ENCODE measurements at regions of chr5 and their contacts with region 1.

Region 1: GRCh38 chr5:138789771-138790242 is 36.6 kb downstream of the CTNNA1 start:
- DNase-seq: peak; percentile 13
- ATAC-seq: peak; percentile 56
- H3K4me3 Mint-ChIP-seq: no peak overlapping the region
- H3K27ac Mint-ChIP-seq: no peak overlapping the region
- H3K4me1 Mint-ChIP-seq: peaks cover 30% of the 10 kb centered on the region
- H3K27me3 Mint-ChIP-seq: peaks cover 55% of the 10 kb centered on the region
- CTCF ChIP-seq: peak; percentile 70

Region 2: GRCh38 chr5:138696503-138697191 is 93.2 kb before region 1 on chr5:
- CTCF ChIA-PET with region 1: no interaction called
- POLR2A ChIA-PET with region 1: no interaction called
- intact Hi-C with region 1: no loop called
- DNase-seq: no peak
- ATAC-seq: no peak
- H3K4me3 Mint-ChIP-seq: no peak overlapping the region
- H3K27ac Mint-ChIP-seq: no peak overlapping the region
- H3K4me1 Mint-ChIP-seq: peaks cover 1% of the 10 kb centered on the region
- H3K27me3 Mint-ChIP-seq: peaks cover 40% of the 10 kb centered on the region
- CTCF ChIP-seq: no peak

Region 3: GRCh38 chr5:138772986-138773594 is 16.7 kb before region 1 on chr5:
- CTCF ChIA-PET with region 1: interaction called, 13 read pairs
- POLR2A ChIA-PET with region 1: no interaction called
- intact Hi-C with region 1: no loop called
- DNase-seq: no peak
- ATAC-seq: no peak
- H3K4me3 Mint-ChIP-seq: no peak overlapping the region
- H3K27ac Mint-ChIP-seq: no peak overlapping the region
- H3K4me1 Mint-ChIP-seq: no peaks in the 10 kb centered on the region
- H3K27me3 Mint-ChIP-seq: peaks cover 13% of the 10 kb centered on the region
- CTCF ChIP-seq: no peak

Region 4: DNA sequence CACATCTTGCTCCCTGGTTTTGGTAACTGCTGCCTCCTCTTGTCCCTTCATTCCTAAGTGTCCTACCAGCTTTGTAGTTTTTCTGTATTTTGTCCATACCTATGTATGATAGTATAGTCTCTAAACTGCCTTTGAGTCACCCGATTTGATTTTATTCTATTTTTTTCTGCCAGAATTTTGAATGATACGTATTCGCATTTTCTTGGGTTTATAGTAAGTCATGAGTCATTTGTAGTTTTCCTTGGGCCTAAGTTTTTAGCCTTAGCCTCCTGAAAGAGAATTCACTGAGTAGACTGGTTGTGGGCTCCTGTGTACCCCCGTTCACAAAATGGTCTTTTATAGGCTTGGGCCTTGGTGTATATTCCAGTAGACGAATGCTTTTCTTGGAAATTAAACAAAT is 25.7 kb after region 1 on chr5:
- CTCF ChIA-PET with region 1: interaction called, 12 read pairs
- POLR2A ChIA-PET with region 1: no interaction called
- intact Hi-C with region 1: no loop called
- DNase-seq: no peak
- ATAC-seq: no peak
- H3K4me3 Mint-ChIP-seq: no peak overlapping the region
- H3K27ac Mint-ChIP-seq: no peak overlapping the region
- H3K4me1 Mint-ChIP-seq: no peaks in the 10 kb centered on the region
- H3K27me3 Mint-ChIP-seq: peaks cover 3% of the 10 kb centered on the region
- CTCF ChIP-seq: no peak

Region 5: GRCh38 chr5:139061274-139061673 is 271.5 kb after region 1 on chr5:
- CTCF ChIA-PET with region 1: no interaction called
- POLR2A ChIA-PET with region 1: no interaction called
- intact Hi-C with region 1: no loop called
- DNase-seq: no peak
- ATAC-seq: no peak
- H3K4me3 Mint-ChIP-seq: no peak overlapping the region
- H3K27ac Mint-ChIP-seq: no peak overlapping the region
- H3K4me1 Mint-ChIP-seq: no peaks in the 10 kb centered on the region
- H3K27me3 Mint-ChIP-seq: no peaks in the 10 kb centered on the region
- CTCF ChIP-seq: no peak

Region 6: GRCh38 chr5:139104577-139105276 is 314.9 kb after region 1 on chr5:
- CTCF ChIA-PET with region 1: no interaction called
- POLR2A ChIA-PET with region 1: no interaction called
- intact Hi-C with region 1: no loop called
- DNase-seq: no peak
- ATAC-seq: no peak
- H3K4me3 Mint-ChIP-seq: no peak overlapping the region
- H3K27ac Mint-ChIP-seq: no peak overlapping the region
- H3K4me1 Mint-ChIP-seq: no peaks in the 10 kb centered on the region
- H3K27me3 Mint-ChIP-seq: no peaks in the 10 kb centered on the region
- CTCF ChIP-seq: no peak